Heart left ventricle (tissue), 16 donors: ENCODE measurements at regions of chr3 and their contacts with region 1.

Region 1: DNA sequence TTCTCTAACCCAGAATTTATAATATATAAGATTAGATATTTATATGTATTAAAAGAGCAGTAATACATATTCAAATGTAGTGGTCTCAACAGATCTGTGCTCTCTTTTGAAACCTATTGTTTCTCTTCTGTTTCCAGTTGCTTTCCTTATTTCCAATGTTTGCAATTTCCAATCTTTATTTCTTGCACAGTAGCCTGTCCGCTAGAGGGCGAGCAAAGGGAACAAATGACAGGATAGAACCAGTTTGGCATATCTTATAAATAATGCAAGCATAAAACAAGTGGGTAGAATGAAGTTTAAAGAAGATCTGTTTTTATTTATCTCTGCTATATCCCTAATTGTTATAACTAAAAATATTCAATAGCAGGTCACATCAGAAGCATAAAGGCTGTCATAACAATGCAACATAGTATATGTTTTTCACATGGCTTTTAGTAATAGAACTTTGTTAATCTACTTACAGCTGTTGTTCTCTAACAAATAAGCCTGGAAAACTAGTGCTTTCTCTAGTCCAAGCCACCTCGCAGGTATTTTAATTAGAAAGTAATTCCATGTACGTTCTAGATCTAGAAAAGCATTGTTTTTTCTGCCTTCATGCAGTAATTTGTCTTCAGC is 15.1 kb upstream of the TCAIM start:
- DNase-seq: peak in 4 of 5 donors; percentile 53 to 73 (median 60)
- ATAC-seq: peak in 2 of 4 donors; percentile 34 to 48
- H3K4me3 ChIP-seq: no peak overlapping the region
- H3K27ac ChIP-seq: no peak overlapping the region
- H3K4me1 ChIP-seq: no peaks in the 10 kb centered on the region
- H3K27me3 ChIP-seq: no peaks in the 10 kb centered on the region
- CTCF ChIP-seq: peak; percentile 60 to 92 (median 82)
- POLR2A ChIP-seq: no peak

Region 2: DNA sequence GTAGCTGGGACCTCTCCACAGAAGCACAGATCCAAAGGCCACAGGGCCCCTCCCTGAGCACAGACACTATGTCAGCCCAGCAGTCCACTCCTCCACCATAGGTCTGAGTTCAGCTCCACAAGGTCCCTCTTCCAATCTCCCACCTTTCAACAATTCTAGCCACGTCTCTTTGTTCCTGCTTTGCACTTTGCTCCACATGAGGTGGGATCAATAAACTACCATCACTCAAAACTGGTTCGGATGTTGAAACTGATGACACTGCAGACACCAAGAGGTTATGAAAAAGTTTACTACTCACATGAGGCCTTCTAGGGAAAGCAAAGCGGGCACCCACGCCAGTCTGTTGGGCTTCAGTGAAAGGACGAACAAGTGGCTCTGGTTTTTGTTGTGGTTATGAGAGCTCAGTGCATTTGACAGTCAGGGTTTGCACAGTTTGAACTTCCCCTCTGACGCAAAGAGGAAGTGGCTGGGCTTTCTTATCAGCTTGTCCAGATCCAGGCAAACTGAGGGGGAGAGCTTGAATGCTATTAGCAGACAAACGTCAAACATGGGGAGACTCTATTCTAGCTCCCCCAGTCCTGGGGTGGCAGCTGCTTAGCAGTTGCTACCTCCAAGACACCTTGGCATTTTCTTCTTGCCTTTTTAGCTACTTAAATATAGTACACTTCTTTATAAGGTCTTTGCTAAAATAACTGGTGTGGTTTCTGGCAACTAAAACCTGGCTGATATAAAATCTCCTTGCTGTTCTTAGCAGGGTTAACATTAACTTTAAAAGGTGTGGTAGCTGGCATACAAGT is 116.2 kb after region 1 on chr3:
- intact Hi-C with region 1: loop called in 1 of 10 experiments (anchors 5 kb)
- DNase-seq: peak; percentile 75 to 86 (median 80)
- ATAC-seq: peak; percentile 92 to 97 (median 96)
- H3K4me3 ChIP-seq: peak overlapping the region in 10 of 12 donors; percentile 12 to 54 (median 34)
- H3K27ac ChIP-seq: peak overlapping the region; percentile 88 to 98 (median 92)
- H3K4me1 ChIP-seq: peaks cover 0 to 33% (median 23%) of the 10 kb centered on the region in 12 donors
- H3K27me3 ChIP-seq: no peaks in the 10 kb centered on the region
- CTCF ChIP-seq: no peak
- POLR2A ChIP-seq: peak in 1 of 2 donors; percentile 40

Region 3: GRCh38 chr3:44477312-44478030 is 154.0 kb after region 1 on chr3 and contains the start of gene ZNF445:
- intact Hi-C with region 1: loop called in 4 of 10 experiments (anchors 5 to 10 kb)
- DNase-seq: peak; percentile 79 to 91 (median 85)
- ATAC-seq: peak; percentile 69 to 99 (median 98)
- H3K4me3 ChIP-seq: peak within 1 kb of the TSS; percentile 58 to 96 (median 76)
- H3K27ac ChIP-seq: peak within 1 kb of the TSS; percentile 37 to 87 (median 66)
- H3K4me1 ChIP-seq: peaks cover 0 to 23% (median 18%) of the 10 kb centered on the region in 12 donors
- H3K27me3 ChIP-seq: no peaks in the 10 kb centered on the region
- CTCF ChIP-seq: no peak
- POLR2A ChIP-seq: peak in 1 of 2 donors; percentile 39
- total RNA-seq, gene ZNF445: 5.7 to 19.9 (median 12.3) TPM

Region 4: GRCh38 chr3:44510000-44510368 is 186.5 kb after region 1 on chr3:
- intact Hi-C with region 1: loop called in 1 of 10 experiments (anchors 2 kb)
- DNase-seq: no peak
- ATAC-seq: peak in 1 of 4 donors; percentile 5
- H3K4me3 ChIP-seq: peak overlapping the region; percentile 74 to 99 (median 92)
- H3K27ac ChIP-seq: peak overlapping the region; percentile 49 to 94 (median 89)
- H3K4me1 ChIP-seq: peaks cover 0 to 29% (median 14%) of the 10 kb centered on the region in 12 donors
- H3K27me3 ChIP-seq: no peaks in the 10 kb centered on the region
- CTCF ChIP-seq: no peak
- POLR2A ChIP-seq: no peak